ENCODE measurements at regions of chr4 and their contacts with region 1.

Region 1: GRCh38 chr4:182994171-182994570 is 77.0 kb upstream of the DCTD start:
- DNase-seq: no peak
- H3K4me3 ChIP-seq: no peak overlapping the region
- H3K4me3 Mint-ChIP-seq: no peak overlapping the region
- H3K27ac Mint-ChIP-seq: no peak overlapping the region
- H3K4me1 ChIP-seq: no peaks in the 10 kb centered on the region
- H3K4me1 Mint-ChIP-seq: no peaks in the 10 kb centered on the region
- H3K27me3 ChIP-seq: no peaks in the 10 kb centered on the region
- H3K27me3 Mint-ChIP-seq: no peaks in the 10 kb centered on the region
- CTCF ChIP-seq: no peak

Region 2: GRCh38 chr4:182700362-182701160 is 293.6 kb before region 1 on chr4:
- CTCF ChIA-PET with region 1: no interaction called
- POLR2A ChIA-PET with region 1: interaction called, 17 read pairs
- intact Hi-C with region 1: no loop called
- DNase-seq: no peak
- H3K4me3 ChIP-seq: no peak overlapping the region
- H3K4me3 Mint-ChIP-seq: no peak overlapping the region
- H3K27ac Mint-ChIP-seq: no peak overlapping the region
- H3K4me1 ChIP-seq: no peaks in the 10 kb centered on the region
- H3K4me1 Mint-ChIP-seq: no peaks in the 10 kb centered on the region
- H3K27me3 ChIP-seq: no peaks in the 10 kb centered on the region
- H3K27me3 Mint-ChIP-seq: no peaks in the 10 kb centered on the region
- CTCF ChIP-seq: no peak

Region 3: GRCh38 chr4:183261953-183262775 is 268.0 kb after region 1 on chr4:
- CTCF ChIA-PET with region 1: no interaction called
- POLR2A ChIA-PET with region 1: no interaction called
- intact Hi-C with region 1: no loop called
- DNase-seq: peak; percentile 76 to 83
- H3K4me3 ChIP-seq: no peak overlapping the region
- H3K4me3 Mint-ChIP-seq: no peak overlapping the region
- H3K27ac Mint-ChIP-seq: peak overlapping the region; percentile 73
- H3K4me1 ChIP-seq: peaks cover 33% of the 10 kb centered on the region
- H3K4me1 Mint-ChIP-seq: peaks cover 15% of the 10 kb centered on the region
- H3K27me3 ChIP-seq: no peaks in the 10 kb centered on the region
- H3K27me3 Mint-ChIP-seq: no peaks in the 10 kb centered on the region
- CTCF ChIP-seq: peak; percentile 74 to 82